Posterior vena cava (tissue), 2 donors: ENCODE measurements at regions of chr15 and their contacts with region 1.

Region 1: DNA sequence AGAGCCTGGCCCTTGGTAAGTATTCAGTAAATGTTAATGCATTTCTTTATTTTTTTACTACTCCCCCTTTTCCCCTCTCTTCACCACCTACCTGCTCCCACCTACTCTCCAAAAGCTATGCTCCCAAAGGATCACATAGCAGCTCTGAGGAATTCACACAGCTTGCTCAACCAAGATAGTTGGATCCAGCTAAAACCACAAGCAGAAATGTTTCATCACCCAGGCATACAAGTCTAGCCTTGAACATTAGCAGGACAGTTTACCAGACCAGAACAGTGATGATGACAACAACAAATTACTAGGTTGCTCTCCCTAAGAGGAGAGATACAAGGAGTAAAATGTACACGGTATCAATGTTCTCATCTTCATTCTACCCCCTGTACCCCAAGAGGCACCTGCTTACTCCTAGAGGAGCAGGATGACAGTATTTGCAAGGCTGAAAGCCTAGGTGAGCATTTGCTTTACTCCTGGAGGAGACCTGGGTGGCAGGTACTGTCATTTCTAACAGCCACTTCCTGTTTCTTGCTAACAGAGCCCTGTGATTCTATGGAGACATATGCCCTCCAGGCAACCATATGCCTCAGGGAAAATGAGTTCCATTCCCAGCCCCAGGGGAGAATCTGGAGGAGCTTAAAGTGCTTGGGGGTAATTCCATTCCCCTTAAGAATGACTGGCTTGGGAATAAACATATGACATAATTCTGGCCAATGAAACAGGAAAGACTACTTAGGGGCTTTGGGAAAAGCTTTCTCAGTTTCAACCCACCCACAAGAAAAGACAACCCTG is 237.5 kb downstream of the NTRK3 start:
- DNase-seq: no peak

Region 2: DNA sequence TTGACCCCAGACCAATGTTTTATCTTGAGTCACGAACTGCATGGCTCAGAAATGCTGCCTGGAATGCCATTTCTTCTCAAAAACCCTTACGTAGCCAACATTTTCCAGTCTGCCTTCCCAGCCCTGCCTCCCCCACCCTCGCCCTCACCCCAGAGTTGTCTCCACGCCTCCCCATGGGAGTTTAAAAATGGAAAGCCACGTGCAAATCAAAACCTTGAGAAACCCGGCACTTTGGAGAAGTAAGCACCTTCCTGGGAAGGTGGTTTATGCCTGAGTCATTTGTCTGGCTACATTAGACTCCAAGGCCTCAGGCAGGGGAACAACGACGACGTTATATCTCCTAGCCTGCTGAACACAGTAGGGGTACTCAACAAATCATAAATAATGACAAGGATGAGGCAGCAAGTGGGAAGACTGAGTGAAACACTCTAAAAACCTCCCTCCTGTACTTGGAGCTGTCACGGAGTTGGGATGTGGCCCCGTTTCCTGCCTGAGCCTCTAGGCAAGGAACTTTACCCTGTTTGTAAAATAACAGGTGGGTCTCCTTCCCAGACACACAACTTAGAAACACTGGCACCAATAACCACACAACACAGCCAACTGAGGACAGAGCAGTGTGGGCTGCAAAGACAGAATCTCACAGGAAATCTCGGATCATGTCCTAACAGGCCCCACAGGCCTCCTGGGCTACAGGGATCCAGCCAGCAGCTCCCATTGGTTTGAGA is 58.4 kb after region 1 on chr15:
- intact Hi-C with region 1: loop called in 1 of 2 experiments (anchors 10 kb)
- DNase-seq: no peak

Region 3: DNA sequence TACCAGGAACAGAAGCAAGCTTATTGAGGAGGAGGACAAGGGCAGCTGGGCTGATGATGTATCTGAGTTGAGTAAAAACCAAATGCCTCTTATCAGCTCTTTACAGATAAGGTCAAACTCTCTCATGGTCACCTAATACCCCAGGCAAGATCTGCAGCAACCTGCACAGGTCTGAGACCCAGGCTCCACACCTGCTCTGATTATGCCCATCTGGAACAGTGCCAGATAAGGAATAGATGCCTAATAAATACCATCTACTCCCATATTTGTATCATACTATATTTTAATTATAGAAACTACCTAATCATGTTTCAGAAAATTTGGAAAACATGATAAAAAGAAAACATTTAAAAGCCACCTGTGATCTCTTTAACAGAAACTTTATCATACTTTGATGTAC is 581.5 kb after region 1 on chr15:
- intact Hi-C with region 1: no loop called
- DNase-seq: no peak